ENCODE measurements at regions of chr7 and their contacts with region 1.

Region 1: GRCh38 chr7:73770860-73771670 is 995 bp upstream of the CLDN3 start:
- DNase-seq: no peak
- ATAC-seq: no peak
- H3K4me3 Mint-ChIP-seq: peak overlapping the region; percentile 60
- H3K27ac Mint-ChIP-seq: no peak overlapping the region
- H3K4me1 Mint-ChIP-seq: peaks cover 9% of the 10 kb centered on the region
- H3K27me3 Mint-ChIP-seq: peaks cover 44% of the 10 kb centered on the region
- CTCF ChIP-seq: no peak

Region 2: DNA sequence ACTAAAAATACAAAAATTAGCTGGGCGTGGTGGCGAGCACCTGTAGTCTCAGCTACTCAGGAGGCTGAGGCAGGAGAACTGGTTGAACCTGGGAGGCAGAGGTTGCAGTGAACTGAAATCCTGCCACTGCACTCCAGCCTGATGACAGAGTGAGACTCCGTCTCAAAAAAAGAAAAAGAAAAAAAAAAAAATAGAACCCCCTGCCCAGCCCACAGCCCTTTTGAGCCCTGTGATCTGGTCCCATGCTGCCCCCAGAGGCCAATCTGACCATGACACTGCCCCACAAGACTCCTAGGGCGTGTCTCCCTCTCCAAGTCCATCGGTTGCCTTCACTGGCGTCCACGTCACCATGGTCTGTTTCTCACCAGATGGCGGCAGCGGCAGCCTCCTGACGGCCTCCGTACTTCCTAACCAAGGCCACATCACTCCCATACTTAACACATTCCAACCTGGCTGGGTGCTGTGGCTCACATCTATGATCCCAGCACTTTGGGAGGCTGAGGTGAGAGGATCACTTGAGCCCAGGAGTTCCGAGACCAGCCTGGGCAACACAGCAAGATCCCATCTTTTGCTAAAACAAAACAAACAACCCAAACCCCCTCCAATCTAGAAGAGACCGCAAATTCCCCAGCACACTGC is 69.6 kb before region 1 on chr7:
- CTCF ChIA-PET with region 1: no interaction called
- POLR2A ChIA-PET with region 1: no interaction called
- intact Hi-C with region 1: no loop called
- DNase-seq: no peak
- ATAC-seq: no peak
- H3K4me3 Mint-ChIP-seq: no peak overlapping the region
- H3K27ac Mint-ChIP-seq: no peak overlapping the region
- H3K4me1 Mint-ChIP-seq: peaks cover 6% of the 10 kb centered on the region
- H3K27me3 Mint-ChIP-seq: peaks cover 8% of the 10 kb centered on the region
- CTCF ChIP-seq: no peak

Region 3: GRCh38 chr7:73746003-73746777 is 24.9 kb before region 1 on chr7:
- CTCF ChIA-PET with region 1: no interaction called
- POLR2A ChIA-PET with region 1: no interaction called
- intact Hi-C with region 1: no loop called
- DNase-seq: no peak
- ATAC-seq: no peak
- H3K4me3 Mint-ChIP-seq: no peak overlapping the region
- H3K27ac Mint-ChIP-seq: no peak overlapping the region
- H3K4me1 Mint-ChIP-seq: peaks cover 4% of the 10 kb centered on the region
- H3K27me3 Mint-ChIP-seq: peaks cover 3% of the 10 kb centered on the region
- CTCF ChIP-seq: no peak

Region 4: GRCh38 chr7:73758581-73759138 is 12.4 kb before region 1 on chr7:
- CTCF ChIA-PET with region 1: no interaction called
- POLR2A ChIA-PET with region 1: no interaction called
- intact Hi-C with region 1: no loop called
- DNase-seq: no peak
- ATAC-seq: no peak
- H3K4me3 Mint-ChIP-seq: no peak overlapping the region
- H3K27ac Mint-ChIP-seq: no peak overlapping the region
- H3K4me1 Mint-ChIP-seq: no peaks in the 10 kb centered on the region
- H3K27me3 Mint-ChIP-seq: peaks cover 1% of the 10 kb centered on the region
- CTCF ChIP-seq: no peak

Region 5: GRCh38 chr7:73792594-73793292 is 21.7 kb after region 1 on chr7:
- CTCF ChIA-PET with region 1: no interaction called
- POLR2A ChIA-PET with region 1: no interaction called
- intact Hi-C with region 1: no loop called
- DNase-seq: no peak
- ATAC-seq: no peak
- H3K4me3 Mint-ChIP-seq: no peak overlapping the region
- H3K27ac Mint-ChIP-seq: no peak overlapping the region
- H3K4me1 Mint-ChIP-seq: peaks cover 8% of the 10 kb centered on the region
- H3K27me3 Mint-ChIP-seq: peaks cover 2% of the 10 kb centered on the region
- CTCF ChIP-seq: no peak

Region 6: GRCh38 chr7:73932364-73932763 is 161.3 kb after region 1 on chr7:
- CTCF ChIA-PET with region 1: no interaction called
- POLR2A ChIA-PET with region 1: interaction called, 12 read pairs
- intact Hi-C with region 1: no loop called
- DNase-seq: no peak
- ATAC-seq: no peak
- H3K4me3 Mint-ChIP-seq: no peak overlapping the region
- H3K27ac Mint-ChIP-seq: no peak overlapping the region
- H3K4me1 Mint-ChIP-seq: no peaks in the 10 kb centered on the region
- H3K27me3 Mint-ChIP-seq: peaks cover 17% of the 10 kb centered on the region
- CTCF ChIP-seq: no peak

Measured in activated B cell treated with CpG ODN at 0.5 μM for 24 hours (primary cell).